ENCODE measurements at regions of chr4 and their contacts with region 1.

Region 1: GRCh38 chr4:6909073-6909965 is at the start of gene TBC1D14:
- DNase-seq: peak; percentile 79 to 98 (median 86)

Region 2: DNA sequence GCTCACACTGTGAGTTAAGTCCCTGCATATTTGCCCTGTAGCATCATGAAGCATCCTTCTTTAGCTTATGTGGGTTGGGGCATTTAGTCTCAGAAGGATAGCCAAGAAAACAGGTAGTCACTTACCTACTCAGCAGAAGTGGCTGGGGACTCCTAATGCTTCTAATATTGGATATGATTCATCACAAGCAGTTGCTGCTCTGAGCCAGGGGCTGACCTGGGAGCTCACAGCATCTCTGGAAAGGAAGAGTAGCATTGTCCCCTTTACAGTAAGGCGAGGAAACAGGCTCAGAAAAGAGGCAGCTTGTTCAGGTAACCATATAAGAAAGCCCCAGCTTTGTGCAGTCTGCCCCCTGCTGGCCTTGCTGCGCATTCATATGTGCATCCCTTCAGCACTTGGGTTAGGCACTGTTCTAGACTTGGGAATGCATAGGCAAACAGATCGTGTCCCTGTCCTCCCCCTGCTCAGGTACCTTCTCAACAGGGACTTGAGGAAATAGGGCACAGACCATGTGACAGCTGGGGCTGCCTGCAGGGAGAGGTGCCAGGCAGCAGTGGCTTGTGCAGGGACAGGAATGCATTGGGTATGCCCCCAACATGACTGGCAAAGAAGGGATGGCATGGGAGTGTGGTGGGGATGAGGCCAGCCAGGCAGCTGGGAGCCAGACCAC is 35.4 kb before region 1 on chr4:
- intact Hi-C with region 1: no loop called
- DNase-seq: peak in 9 of 10 donors; percentile 63 to 96 (median 79)

Region 3: DNA sequence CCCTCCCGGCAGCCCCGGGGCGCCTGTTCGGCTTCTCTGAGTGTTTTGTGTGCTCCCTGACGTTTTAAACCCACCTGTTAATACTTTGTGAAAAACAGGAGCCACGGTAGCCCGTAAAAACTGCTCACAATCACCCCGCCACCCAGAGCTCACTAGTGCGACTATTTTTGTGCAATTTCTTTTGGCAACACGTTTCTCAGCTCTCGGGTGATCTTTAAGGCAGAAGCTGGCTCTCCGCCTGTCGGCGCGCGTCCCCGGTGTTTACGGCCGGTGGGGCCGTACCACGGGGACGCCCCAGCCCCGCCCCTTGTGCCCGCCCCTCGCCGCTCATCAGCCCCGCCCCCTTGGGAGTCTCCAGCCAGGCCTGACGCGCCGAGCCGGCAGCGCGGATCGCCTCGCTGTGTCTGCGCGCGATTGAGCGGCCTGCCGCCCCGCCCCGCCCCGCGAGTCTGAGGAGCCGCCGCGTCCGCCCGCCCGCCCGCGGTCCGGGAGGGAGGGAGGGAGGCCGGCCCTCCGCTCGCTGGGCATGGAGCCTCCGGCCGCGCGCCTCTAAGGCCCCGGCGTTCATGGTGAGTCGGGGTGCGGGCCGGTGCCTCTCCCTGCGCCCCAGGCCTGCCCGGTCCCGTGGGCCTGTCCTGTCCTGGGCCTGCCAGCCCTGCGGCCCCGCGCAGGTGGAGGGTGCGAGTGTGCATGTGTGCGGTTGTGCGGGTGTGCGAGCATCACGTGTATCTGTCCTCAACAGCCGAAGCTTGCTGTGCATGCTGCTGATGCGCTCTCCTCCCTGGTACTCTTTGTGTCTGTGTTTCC is 77.7 kb after region 1 on chr4:
- intact Hi-C with region 1: loop called (anchors 1 kb)
- DNase-seq: peak; percentile 92 to 100 (median 96)

Region 4: DNA sequence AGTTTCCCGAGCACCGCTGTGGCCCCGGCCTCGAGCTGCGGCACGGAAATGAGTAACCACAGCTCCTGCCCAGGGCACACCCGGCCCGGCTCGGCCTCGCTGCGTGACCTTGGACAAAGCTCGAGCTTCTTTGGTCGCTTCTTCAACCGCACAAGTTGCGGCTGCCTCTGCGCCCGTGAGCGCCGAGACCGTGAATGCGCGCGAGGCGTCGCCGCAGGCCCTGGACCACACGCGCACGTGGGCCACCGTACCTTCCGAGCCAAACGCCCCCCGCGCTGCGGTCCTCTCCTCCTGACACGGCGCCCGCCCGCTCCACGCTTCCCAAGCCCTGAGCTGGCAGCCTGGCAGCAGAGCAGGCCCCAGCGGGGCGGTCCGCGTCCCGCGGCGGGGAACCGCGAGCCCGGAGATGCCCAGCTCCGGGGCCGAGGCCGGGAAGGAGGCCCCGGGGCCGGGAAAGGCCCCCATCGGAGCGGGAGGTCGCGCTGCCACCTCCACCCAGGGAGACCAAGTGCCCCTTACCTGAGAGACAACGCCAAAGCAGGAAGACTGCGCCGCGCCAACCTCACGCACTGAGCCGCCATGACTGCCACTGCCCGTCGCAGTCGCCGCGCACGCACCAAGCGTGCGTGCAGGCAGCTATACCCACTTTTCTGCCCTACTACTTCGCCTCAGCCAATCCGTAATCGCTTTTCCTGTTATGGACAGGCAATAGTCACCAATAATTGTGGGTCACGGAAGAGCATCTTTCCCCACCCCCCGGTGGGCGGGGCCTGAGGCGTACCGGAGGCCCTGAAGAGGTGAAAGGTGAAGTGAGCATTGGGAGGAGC is 158.3 kb after region 1 on chr4 and contains the start of gene GRPEL1:
- intact Hi-C with region 1: loop called (anchors 2 kb)
- DNase-seq: peak; percentile 98 to 100 (median 99)

Region 5: DNA sequence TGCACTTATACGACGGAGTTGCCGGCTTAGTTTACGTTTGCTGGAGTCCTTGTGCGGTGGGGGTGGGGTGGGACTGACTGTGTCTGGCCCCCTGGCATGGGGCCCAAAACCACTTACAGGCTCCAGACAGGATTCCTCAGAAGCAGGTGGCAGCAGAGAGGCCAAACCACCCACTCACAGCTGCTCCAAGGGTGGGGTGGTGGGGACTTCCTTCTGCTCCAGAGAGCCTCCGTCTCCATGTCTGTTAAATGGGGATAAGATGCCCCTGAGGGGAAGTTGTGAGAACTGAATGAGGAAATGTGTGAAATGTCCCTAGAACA is 488.7 kb after region 1 on chr4:
- intact Hi-C with region 1: no loop called
- DNase-seq: peak in 4 of 10 donors; percentile 24 to 88 (median 79)